Activated CD8-positive, alpha-beta memory T cell treated with anti-CD3 and anti-CD28 coated beads, Interleukin-2, amount 10 ng/mL, durations not matched to agents 7 days and 5 days (primary cell): ENCODE measurements at regions of chr7 and their contacts with region 1.

Region 1: DNA sequence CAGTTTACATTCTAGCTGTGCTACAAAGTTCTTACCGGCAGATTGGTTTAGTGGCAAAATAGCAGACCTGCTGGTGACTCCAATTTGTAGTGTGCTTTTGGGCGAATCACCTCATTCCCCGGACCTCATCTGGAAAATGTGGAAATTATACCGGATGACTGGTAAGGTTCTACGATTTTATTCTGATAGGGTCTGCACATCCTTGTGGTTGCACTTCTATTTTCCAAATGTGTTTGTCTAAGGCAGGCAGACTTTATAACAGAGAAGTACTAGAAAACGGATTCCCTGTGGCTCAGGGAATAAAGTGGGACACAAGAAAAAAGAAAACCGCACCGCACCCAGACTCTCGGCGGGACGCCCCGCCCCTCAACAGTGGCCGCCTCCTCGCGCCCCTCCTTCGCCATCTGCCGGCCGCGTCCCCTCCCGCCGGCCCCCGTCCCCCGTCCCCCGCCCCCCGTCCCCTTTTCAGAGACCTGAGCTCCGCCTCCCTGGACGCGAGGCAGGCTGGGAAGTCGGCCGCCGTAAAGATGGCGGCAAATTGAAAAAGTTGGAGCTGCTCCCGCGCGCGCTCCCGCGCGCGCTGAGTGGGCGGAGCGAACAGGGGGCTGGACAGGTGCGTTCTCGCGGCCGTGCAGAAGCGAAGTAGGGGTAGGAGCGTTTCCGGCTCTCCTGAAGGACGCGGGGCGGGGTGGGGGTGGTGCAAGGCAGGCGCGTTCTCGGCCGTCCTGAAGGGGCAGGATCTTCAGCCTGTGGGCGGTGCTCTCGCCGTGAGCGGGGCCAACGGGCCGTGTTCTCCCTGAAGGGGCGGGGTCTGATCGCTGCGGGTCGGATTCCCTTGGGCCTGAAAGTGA is 531 bp upstream of the CCM2 start:
- DNase-seq: peak; percentile 100
- ATAC-seq: peak; percentile 92
- H3K4me3 Mint-ChIP-seq: peak overlapping the region; percentile 84
- H3K27ac Mint-ChIP-seq: peak overlapping the region; percentile 84
- H3K4me1 Mint-ChIP-seq: peaks cover 59% of the 10 kb centered on the region
- H3K27me3 Mint-ChIP-seq: no peaks in the 10 kb centered on the region

Region 2: DNA sequence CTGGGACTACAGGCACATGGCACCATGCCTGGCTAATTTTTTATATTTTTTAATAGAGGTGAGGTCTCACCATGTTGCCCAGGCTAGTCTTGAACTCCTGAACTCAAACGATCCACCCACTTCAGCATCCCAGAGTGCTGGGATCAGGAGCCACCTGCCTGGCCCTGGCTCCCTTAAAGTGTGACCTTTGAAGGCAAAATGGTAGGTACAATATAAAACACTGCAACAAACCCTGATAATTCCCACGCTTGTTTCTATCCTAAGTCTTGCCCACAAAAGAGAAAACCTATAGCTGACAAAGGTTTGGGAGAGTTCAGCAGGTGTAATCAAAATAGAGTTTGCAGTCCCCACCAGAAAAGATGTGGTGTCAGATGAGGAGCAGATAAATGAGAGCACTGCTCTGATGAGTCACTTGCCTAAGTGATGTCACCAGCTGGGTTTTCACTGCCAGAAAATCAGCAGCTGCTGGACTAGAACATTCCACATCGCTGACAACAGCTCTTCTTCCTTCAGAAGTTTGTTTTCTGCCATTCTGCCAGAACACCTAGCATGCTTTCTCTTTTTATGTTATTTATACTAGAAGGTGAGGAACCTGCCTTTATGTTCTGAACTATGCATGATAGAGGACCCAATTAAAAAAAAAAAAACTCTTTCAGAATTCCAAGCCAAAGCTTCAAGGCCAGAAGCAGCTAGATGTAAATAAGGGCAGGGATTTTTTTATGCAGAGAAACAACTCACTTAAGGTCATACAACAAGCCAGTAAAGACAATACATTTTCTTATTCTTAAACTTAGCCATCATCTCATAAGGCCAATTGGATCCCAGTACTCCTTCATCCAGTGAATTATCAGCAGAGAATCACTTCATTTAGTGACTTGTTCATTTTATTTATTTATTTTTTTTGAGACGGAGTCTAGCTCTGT is 132.1 kb before region 1 on chr7:
- CTCF ChIA-PET with region 1: no interaction called
- DNase-seq: no peak
- ATAC-seq: peak; percentile 55
- H3K4me3 Mint-ChIP-seq: no peak overlapping the region
- H3K27ac Mint-ChIP-seq: no peak overlapping the region
- H3K4me1 Mint-ChIP-seq: peaks cover 9% of the 10 kb centered on the region
- H3K27me3 Mint-ChIP-seq: peaks cover 5% of the 10 kb centered on the region

Region 3: GRCh38 chr7:44965937-44966730 is 33.3 kb before region 1 on chr7:
- CTCF ChIA-PET with region 1: no interaction called
- DNase-seq: no peak
- ATAC-seq: no peak
- H3K4me3 Mint-ChIP-seq: no peak overlapping the region
- H3K27ac Mint-ChIP-seq: peak overlapping the region; percentile 40
- H3K4me1 Mint-ChIP-seq: peaks cover 12% of the 10 kb centered on the region
- H3K27me3 Mint-ChIP-seq: no peaks in the 10 kb centered on the region

Region 4: GRCh38 chr7:44980393-44981034 is 19.0 kb before region 1 on chr7:
- CTCF ChIA-PET with region 1: interaction called, 27 read pairs
- DNase-seq: peak; percentile 91
- ATAC-seq: peak; percentile 22
- H3K4me3 Mint-ChIP-seq: peak overlapping the region; percentile 99
- H3K27ac Mint-ChIP-seq: peak overlapping the region; percentile 95
- H3K4me1 Mint-ChIP-seq: peaks cover 71% of the 10 kb centered on the region
- H3K27me3 Mint-ChIP-seq: no peaks in the 10 kb centered on the region

Region 5: DNA sequence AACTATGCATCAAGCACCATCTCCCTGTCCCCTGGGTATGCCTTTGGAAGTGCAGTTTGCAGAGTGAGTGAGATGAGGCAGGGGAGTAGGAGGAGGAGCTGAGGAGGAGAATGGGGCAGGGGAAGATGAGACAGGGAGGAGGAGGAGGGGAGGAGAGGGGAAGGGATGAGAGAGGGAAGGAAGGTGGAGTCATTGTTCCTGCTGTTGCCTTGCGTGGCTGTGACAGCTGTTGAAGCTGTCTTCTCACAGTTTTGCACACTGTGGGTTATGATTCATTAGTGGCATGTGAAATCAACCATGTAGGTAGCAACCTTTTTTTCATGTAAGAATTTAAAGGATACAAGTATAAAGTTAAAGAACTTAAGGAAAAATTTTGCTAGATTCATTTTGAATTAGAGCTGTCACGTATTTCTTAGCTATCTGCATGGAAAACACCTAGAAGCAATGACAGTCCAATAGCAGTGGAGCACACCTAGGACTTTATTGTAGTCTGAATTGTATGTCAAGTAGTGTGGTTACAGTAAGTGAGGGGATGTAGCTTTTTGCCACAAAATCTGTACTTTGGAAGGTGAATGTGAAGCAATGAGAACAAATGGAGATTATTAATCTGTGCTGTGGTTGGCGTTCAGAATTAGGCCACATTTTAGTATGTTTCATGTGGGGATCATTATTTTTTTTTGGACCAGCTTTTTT is 22.3 kb after region 1 on chr7:
- CTCF ChIA-PET with region 1: interaction called, 10 read pairs
- DNase-seq: no peak
- ATAC-seq: peak; percentile 75
- H3K4me3 Mint-ChIP-seq: no peak overlapping the region
- H3K27ac Mint-ChIP-seq: peak overlapping the region; percentile 76
- H3K4me1 Mint-ChIP-seq: peaks cover 42% of the 10 kb centered on the region
- H3K27me3 Mint-ChIP-seq: no peaks in the 10 kb centered on the region

Region 6: GRCh38 chr7:45026984-45027773 is 27.7 kb after region 1 on chr7:
- CTCF ChIA-PET with region 1: interaction called, 10 read pairs
- DNase-seq: peak; percentile 68
- ATAC-seq: peak; percentile 62
- H3K4me3 Mint-ChIP-seq: peak overlapping the region; percentile 82
- H3K27ac Mint-ChIP-seq: peak overlapping the region; percentile 86
- H3K4me1 Mint-ChIP-seq: peaks cover 71% of the 10 kb centered on the region
- H3K27me3 Mint-ChIP-seq: no peaks in the 10 kb centered on the region